ENCODE measurements at regions of chr2 and their contacts with region 1.

Region 1: DNA sequence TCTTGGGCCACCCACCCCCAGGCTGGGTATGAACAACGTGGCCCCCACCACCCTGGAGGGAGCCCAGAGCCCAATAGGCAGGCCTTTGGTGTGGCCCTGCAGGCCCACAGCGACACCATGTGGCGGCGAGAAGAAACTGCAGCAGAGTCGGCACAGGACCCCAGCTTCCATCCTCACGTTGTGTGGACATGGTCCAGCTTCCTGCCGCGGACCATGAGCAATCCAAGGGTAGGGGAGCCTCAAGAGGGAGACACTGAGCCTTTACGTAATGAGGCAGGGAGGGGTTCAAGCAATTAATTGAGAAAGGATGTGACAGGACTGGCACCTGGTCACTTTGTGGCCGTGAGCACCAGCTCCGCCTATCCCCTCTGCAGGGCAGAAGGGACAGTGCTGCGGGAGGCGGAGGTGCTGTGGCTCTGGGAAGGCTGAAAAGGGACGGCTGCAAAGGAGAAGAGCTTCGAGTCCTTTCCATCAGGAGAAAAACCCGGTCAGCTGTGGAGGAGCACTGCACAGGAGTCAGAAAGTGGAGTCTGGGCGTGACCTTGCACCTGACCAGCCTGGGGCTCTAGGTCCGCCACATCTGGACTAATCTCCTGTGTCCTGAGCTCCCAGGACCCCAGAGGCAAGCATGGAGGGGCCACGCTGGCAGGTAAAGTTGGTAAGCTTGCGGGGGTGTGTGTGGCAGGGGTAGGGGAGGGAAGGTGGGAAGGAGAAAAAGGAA is 44.8 kb downstream of the TMEM37 start:
- DNase-seq: peak; percentile 34
- H3K4me3 Mint-ChIP-seq: no peak overlapping the region
- H3K27ac Mint-ChIP-seq: no peak overlapping the region
- H3K4me1 Mint-ChIP-seq: no peaks in the 10 kb centered on the region
- H3K27me3 Mint-ChIP-seq: no peaks in the 10 kb centered on the region

Region 2: DNA sequence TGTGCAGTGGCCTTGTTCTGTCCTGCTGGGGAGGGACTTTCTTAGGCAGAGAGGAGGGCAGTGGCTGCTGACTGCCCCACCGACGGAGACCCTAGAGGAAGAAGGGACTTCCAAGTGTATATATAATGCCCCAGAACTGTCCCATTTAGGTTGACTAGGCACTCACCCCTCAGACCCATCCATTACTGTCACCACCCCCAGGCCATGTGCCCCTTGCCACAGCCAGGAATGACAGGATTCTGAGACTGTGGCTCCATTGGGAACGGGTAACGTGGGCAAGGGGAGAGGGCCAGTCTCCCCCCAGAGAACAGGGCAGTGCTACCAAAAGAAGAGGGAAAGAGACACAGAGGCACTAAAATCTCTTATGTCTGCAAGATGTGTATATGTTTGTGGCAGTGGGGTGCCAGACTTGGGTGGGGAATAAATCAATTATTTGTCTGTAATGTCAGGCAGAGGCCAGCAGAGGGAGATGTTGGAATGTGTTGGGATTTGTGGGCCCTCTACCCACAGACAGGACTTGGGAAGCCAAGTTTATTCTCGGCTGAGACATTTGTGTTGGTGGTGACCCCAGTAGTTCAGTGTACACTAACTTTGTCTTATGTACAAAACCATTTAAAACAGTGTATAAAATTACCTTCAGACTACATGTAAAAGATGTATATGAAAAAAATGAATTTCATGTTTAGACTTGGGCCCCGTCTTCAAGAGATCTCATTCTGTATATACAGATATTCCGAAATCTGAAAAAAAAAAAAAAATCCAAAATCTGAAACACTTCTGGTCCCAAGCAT is 68.8 kb before region 1 on chr2:
- CTCF ChIA-PET with region 1: interaction called, 10 read pairs
- POLR2A ChIA-PET with region 1: no interaction called
- DNase-seq: no peak
- H3K4me3 Mint-ChIP-seq: no peak overlapping the region
- H3K27ac Mint-ChIP-seq: no peak overlapping the region
- H3K4me1 Mint-ChIP-seq: no peaks in the 10 kb centered on the region
- H3K27me3 Mint-ChIP-seq: peaks cover 11% of the 10 kb centered on the region

Region 3: GRCh38 chr2:119494163-119494790 is 17.8 kb after region 1 on chr2:
- CTCF ChIA-PET with region 1: interaction called, 10 read pairs
- POLR2A ChIA-PET with region 1: no interaction called
- DNase-seq: no peak
- H3K4me3 Mint-ChIP-seq: no peak overlapping the region
- H3K27ac Mint-ChIP-seq: no peak overlapping the region
- H3K4me1 Mint-ChIP-seq: no peaks in the 10 kb centered on the region
- H3K27me3 Mint-ChIP-seq: peaks cover 15% of the 10 kb centered on the region

Measured in activated CD4-positive, alpha-beta memory T cell treated with anti-CD3 and anti-CD28 coated beads, Interleukin-2, amount 10 ng/mL, durations not matched to agents 7 days and 5 days (primary cell).